ENCODE measurements at regions of chr10 and their contacts with region 1.

Region 1: GRCh38 chr10:131874991-131875451 is 25.8 kb upstream of the PPP2R2D start:
- DNase-seq: peak; percentile 86
- ATAC-seq: peak; percentile 86
- H3K4me3 Mint-ChIP-seq: no peak overlapping the region
- H3K27ac Mint-ChIP-seq: no peak overlapping the region
- H3K4me1 Mint-ChIP-seq: no peaks in the 10 kb centered on the region
- H3K27me3 Mint-ChIP-seq: peaks cover 13% of the 10 kb centered on the region

Region 2: GRCh38 chr10:130341356-130341755 is 1533.7 kb before region 1 on chr10:
- CTCF ChIA-PET with region 1: no interaction called
- POLR2A ChIA-PET with region 1: no interaction called
- intact Hi-C with region 1: loop called in 1 of 2 experiments (anchors 10 kb)
- DNase-seq: peak; percentile 58
- ATAC-seq: no peak
- H3K4me3 Mint-ChIP-seq: no peak overlapping the region
- H3K27ac Mint-ChIP-seq: no peak overlapping the region
- H3K4me1 Mint-ChIP-seq: no peaks in the 10 kb centered on the region
- H3K27me3 Mint-ChIP-seq: peaks cover 14% of the 10 kb centered on the region

Region 3: GRCh38 chr10:131312478-131312836 is 562.6 kb before region 1 on chr10:
- CTCF ChIA-PET with region 1: no interaction called
- POLR2A ChIA-PET with region 1: no interaction called
- intact Hi-C with region 1: loop called in 1 of 2 experiments (anchors 10 kb)
- DNase-seq: peak; percentile 42
- ATAC-seq: peak; percentile 25
- H3K4me3 Mint-ChIP-seq: peak overlapping the region; percentile 43
- H3K27ac Mint-ChIP-seq: no peak overlapping the region
- H3K4me1 Mint-ChIP-seq: peaks cover 4% of the 10 kb centered on the region
- H3K27me3 Mint-ChIP-seq: peaks cover 41% of the 10 kb centered on the region

Region 4: DNA sequence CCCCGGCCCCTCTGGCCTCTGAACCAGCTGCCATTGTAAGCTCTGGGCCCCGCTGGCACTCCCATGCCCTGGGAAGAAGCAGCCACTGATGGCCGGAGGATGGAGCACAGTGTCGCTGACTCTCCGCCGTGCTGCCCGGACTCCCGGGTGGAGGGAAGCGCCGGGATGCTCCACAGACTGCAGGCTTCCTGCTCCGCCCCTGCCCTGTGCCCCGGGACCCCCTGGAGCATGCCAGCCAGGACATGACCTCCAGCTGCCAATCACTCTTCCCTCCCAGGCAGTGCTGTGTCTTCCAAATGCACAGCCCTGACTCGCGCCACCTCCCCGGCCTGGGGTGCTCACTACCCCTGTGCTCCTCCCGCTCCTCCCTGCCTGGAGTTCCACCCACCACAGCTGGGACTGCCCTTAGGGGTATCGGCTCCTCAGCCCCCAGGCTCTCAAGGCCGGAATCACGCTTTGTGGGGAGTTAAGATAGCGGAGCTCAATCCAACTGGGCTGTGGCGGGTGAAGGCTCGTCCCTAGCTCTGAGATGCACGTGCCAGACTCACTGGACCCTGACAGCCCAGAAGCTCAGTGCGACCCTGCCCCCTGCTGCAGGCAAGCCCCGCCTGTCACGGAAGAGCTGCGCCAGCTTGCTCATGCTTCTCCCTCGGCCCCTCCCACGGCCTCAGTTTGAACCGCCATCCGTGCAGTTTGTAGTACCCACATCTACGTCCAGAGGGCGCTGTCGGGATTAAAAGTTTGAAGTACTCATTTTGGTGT is 421.2 kb before region 1 on chr10:
- CTCF ChIA-PET with region 1: no interaction called
- POLR2A ChIA-PET with region 1: no interaction called
- intact Hi-C with region 1: loop called (anchors 1 to 10 kb)
- DNase-seq: peak; percentile 88
- ATAC-seq: peak; percentile 72
- H3K4me3 Mint-ChIP-seq: peak overlapping the region; percentile 21
- H3K27ac Mint-ChIP-seq: no peak overlapping the region
- H3K4me1 Mint-ChIP-seq: peaks cover 3% of the 10 kb centered on the region
- H3K27me3 Mint-ChIP-seq: peaks cover 16% of the 10 kb centered on the region

Region 5: DNA sequence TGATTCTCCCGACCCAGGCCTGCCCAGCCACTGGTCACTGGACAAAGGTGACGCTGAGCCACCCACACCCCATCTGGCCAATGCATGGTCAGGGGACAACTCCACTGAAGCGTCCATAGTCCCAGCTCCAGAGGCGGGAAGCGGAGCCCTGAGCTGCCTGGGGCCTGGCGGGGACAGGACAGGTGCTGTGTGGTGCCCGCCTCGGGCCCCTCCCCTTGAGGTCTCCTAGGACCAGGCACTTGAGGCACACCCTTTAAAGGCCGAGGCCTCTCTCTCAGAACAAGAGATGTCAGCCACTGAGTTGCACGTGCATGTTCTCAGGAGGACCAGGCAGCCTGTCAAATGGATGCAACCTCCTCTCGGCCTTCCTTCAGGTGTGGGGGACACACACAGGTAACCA is 26.7 kb before region 1 on chr10:
- CTCF ChIA-PET with region 1: no interaction called
- POLR2A ChIA-PET with region 1: no interaction called
- intact Hi-C with region 1: no loop called
- DNase-seq: no peak
- ATAC-seq: no peak
- H3K4me3 Mint-ChIP-seq: no peak overlapping the region
- H3K27ac Mint-ChIP-seq: no peak overlapping the region
- H3K4me1 Mint-ChIP-seq: no peaks in the 10 kb centered on the region
- H3K27me3 Mint-ChIP-seq: no peaks in the 10 kb centered on the region